ENCODE measurements at regions of chr14 and their contacts with region 1.

Region 1: DNA sequence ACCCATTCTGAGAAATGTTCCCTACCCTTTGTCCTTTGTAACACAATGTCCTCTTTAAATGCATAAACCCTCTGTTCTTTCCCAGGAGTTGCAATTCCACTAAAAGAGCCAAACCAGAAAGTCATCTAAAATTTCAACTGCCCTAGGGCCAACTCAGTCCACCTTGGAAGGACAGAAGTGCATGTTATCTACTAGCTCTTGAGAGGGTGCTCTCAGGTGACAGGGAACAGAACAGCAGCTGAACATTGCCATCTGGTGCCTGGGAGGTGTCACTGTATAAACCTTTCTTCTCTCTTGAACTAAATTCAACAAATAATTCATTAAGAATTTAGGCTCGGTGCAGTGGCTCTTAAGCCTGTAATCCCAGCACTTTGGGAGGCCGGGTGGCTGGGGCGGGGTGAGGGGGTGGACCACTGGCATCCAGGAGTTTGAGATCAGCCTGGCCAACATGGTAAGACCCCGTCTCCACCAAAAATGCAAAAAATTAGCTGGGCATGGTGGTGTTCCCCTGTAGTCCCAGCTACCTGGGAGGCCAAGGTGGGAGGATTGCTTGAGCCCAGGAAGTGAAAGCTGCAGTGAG is 10.3 kb upstream of the FERMT2 start:
- DNase-seq: peak; percentile 58
- ATAC-seq: peak; percentile 98
- H3K4me3 ChIP-seq: no peak overlapping the region
- H3K27ac ChIP-seq: no peak overlapping the region
- H3K4me1 ChIP-seq: 0 out of 4 replicates have a peak, but pooled peaks cover 0 to 6% of the 10 kb centered on the region in 2 experiments
- H3K27me3 ChIP-seq: no peaks in the 10 kb centered on the region
- CTCF ChIP-seq: peak; percentile 69 to 78 (median 71)
- POLR2A ChIP-seq: no peak
- RAD21 ChIP-seq: peak; percentile 89

Region 2: DNA sequence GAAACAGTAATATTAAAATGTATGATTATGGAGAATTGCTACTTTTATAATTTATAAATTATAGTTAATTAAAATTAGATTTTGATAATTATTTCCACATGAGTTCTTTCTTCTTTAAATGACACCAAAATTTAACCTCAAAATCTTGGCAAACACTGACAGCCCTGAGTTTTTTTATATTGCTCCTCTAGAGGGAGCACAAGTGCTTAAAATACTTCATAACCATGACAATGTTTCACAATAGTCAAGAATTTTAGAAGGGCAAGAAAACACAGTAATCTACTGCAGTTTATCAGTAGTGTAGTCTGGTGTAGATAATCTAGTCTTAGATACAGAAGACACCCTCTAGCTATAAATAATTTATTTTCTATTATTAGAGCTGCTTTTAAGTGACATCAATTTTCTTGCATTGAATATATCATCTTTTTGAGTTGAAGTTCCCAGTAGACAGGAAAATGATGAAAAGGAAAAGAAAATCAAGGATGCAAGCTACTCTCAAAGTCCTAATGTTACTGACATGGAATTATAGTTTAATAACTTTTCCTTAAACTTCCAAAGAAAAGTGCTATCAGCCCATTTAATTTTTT is 661.4 kb before region 1 on chr14:
- CTCF ChIA-PET with region 1: no interaction called
- POLR2A ChIA-PET with region 1: no interaction called
- RAD21 ChIA-PET with region 1: no interaction called
- intact Hi-C with region 1: loop called (anchors 5 kb)
- DNase-seq: peak; percentile 31
- ATAC-seq: no peak; the same call in 1 of the 2 replicates
- H3K4me3 ChIP-seq: no peak overlapping the region
- H3K27ac ChIP-seq: no peak overlapping the region
- H3K4me1 ChIP-seq: no peaks in the 10 kb centered on the region
- H3K27me3 ChIP-seq: no peaks in the 10 kb centered on the region
- CTCF ChIP-seq: peak; percentile 56 to 65 (median 65); a peak in 5 of 6 replicates
- POLR2A ChIP-seq: no peak
- RAD21 ChIP-seq: peak; percentile 71

Region 3: GRCh38 chr14:52801015-52801712 is 160.0 kb before region 1 on chr14:
- CTCF ChIA-PET with region 1: no interaction called
- POLR2A ChIA-PET with region 1: no interaction called
- RAD21 ChIA-PET with region 1: no interaction called
- intact Hi-C with region 1: no loop called
- DNase-seq: no peak
- ATAC-seq: no peak
- H3K4me3 ChIP-seq: no peak overlapping the region
- H3K27ac ChIP-seq: no peak overlapping the region
- H3K4me1 ChIP-seq: no peaks in the 10 kb centered on the region
- H3K27me3 ChIP-seq: no peaks in the 10 kb centered on the region
- CTCF ChIP-seq: no peak
- POLR2A ChIP-seq: no peak
- RAD21 ChIP-seq: no peak

Region 4: GRCh38 chr14:52824507-52824906 is 136.6 kb before region 1 on chr14:
- CTCF ChIA-PET with region 1: interaction called, 18 read pairs
- POLR2A ChIA-PET with region 1: no interaction called
- RAD21 ChIA-PET with region 1: interaction called, 4 to 6 read pairs
- intact Hi-C with region 1: loop called (anchors 1 kb)
- DNase-seq: no peak
- ATAC-seq: no peak
- H3K4me3 ChIP-seq: no peak overlapping the region
- H3K27ac ChIP-seq: no peak overlapping the region
- H3K4me1 ChIP-seq: 0 out of 4 replicates have a peak, but pooled peaks cover 0 to 2% of the 10 kb centered on the region in 2 experiments
- H3K27me3 ChIP-seq: no peaks in the 10 kb centered on the region
- CTCF ChIP-seq: no peak
- POLR2A ChIP-seq: no peak
- RAD21 ChIP-seq: no peak

Region 5: GRCh38 chr14:52944254-52944653 is 16.9 kb before region 1 on chr14:
- CTCF ChIA-PET with region 1: no interaction called
- POLR2A ChIA-PET with region 1: interaction called, 4 read pairs
- RAD21 ChIA-PET with region 1: interaction called in 1 of 2 experiments, 13 read pairs
- intact Hi-C with region 1: no loop called
- DNase-seq: no peak
- ATAC-seq: no peak
- H3K4me3 ChIP-seq: no peak overlapping the region
- H3K27ac ChIP-seq: no peak overlapping the region
- H3K4me1 ChIP-seq: peaks cover 6 to 8% of the 10 kb centered on the region in 2 experiments; a peak in 3 of 4 replicates
- H3K27me3 ChIP-seq: no peaks in the 10 kb centered on the region
- CTCF ChIP-seq: no peak
- POLR2A ChIP-seq: no peak
- RAD21 ChIP-seq: no peak

Region 6: DNA sequence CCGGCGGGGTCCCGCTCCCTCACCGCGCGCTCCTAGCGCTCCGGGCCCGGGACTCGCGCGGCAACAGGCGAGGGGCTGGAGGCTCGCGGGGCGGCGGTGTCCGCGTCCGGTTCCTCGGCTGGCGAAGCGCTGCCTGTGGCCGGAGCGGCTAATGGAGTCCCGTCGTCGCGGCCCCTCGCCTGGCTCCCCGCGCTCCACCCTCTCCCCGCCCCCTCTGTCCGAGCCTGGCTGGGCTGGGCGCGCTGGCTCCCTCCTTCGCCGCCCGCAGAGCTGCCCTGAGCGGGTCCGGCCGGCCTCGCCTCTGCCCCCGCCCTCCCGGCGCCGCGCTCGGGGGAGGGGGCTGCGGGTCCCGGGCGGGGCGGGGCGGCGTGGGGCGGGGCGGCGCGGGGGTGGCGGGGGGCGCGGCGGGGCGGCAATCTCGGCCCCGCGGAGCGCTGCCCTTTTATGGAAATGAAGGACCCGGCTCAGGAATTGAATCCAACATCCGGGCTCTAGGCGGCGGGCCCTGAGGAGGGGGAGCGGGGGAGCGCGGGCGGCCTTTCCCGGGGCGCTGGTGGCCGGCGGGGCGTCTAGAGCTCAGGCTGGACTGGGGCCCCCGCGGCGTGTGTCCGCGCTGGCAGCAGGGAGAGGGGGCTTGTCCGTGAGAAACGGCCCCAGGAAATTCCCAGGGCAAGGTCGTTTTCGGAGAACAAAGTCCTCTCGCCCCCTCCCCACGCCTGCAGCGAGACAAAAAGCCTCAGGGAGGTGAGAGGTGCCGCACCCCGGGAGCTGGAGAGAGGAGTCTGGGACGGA is 10.1 kb before region 1 on chr14 and contains the start of gene FERMT2:
- CTCF ChIA-PET with region 1: interaction called, 18 read pairs
- POLR2A ChIA-PET with region 1: interaction called, 5 read pairs
- RAD21 ChIA-PET with region 1: interaction called in 1 of 2 experiments, 3 read pairs
- intact Hi-C with region 1: no loop called
- DNase-seq: peak; percentile 57
- ATAC-seq: peak; percentile 91
- H3K4me3 ChIP-seq: peak within 1 kb of the TSS; percentile 80 to 92
- H3K27ac ChIP-seq: peak within 1 kb of the TSS; percentile 85
- H3K4me1 ChIP-seq: peaks cover 11 to 22% of the 10 kb centered on the region in 2 experiments; a peak in 3 of 4 replicates
- H3K27me3 ChIP-seq: no peaks in the 10 kb centered on the region
- CTCF ChIP-seq: no peak
- POLR2A ChIP-seq: no peak
- RAD21 ChIP-seq: no peak
- total RNA-seq, gene FERMT2: 24.8 TPM

Measured in HCT116 (cell line).